ENCODE measurements at regions of chr1 and their contacts with region 1.

Region 1: DNA sequence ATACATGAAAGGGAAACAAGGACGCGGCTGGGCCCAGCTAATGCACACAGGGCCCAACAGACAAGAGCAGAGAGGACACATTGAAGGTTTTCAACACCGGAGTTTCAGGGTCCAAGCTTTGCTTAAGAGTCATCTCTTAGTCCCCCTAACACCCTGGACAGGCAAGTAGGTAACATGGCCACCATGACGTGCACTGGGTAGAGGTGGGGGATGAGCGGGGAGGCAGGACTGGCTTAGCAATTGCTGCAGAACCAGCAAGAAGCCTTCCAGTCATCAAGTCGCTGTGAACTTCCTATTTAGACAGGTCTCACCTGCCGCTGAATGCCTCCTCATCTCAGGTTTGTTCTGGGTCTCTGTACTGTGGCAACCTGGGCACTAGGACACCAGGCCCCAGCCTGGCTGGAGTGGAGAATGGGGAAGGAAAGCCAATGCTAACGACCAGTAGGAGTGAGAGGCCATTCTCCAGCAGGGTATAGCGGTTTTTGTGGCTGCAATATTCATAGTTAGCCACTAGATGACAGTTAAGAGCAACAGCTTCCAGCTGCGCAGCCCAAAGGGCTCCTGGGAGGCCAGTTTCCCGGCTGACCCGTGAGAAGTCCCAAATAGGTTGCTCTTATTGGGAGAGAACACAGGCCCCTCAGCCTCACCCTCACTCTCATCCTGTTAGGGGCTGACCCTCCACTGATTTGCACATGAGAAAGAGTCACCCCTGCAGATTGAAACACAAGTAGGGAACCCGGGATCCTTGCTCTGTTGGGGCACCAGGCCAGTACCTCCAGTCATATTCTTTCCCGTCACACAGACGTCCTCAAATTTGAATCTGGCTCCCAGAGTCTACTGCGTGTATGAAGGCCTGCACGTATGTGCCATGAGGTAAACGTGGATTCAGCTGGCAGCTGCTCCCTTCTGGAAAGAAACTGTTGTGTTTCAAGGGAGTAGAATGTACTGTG is 6.0 kb upstream of the PIGC start:
- DNase-seq: peak; percentile 71
- H3K4me3 ChIP-seq: no peak overlapping the region; a peak in 1 of 4 replicates
- H3K27ac ChIP-seq: no peak overlapping the region
- H3K4me1 ChIP-seq: peaks cover 0 to 12% of the 10 kb centered on the region in 2 experiments; a peak in 2 of 4 replicates
- H3K27me3 ChIP-seq: no peaks in the 10 kb centered on the region
- CTCF ChIP-seq: peak; percentile 72
- EP300 ChIP-seq: no peak
- RAD21 ChIP-seq: peak; percentile 89

Region 2: GRCh38 chr1:172727956-172728603 is 278.2 kb after region 1 on chr1:
- CTCF ChIA-PET with region 1: interaction called, 16 read pairs
- POLR2A ChIA-PET with region 1: no interaction called
- DNase-seq: peak; percentile 28
- H3K4me3 ChIP-seq: no peak overlapping the region
- H3K27ac ChIP-seq: no peak overlapping the region
- H3K4me1 ChIP-seq: peaks cover 3 to 6% of the 10 kb centered on the region in 2 experiments; a peak in 2 of 4 replicates
- H3K27me3 ChIP-seq: no peaks in the 10 kb centered on the region
- CTCF ChIP-seq: peak; percentile 59
- EP300 ChIP-seq: no peak
- RAD21 ChIP-seq: peak; percentile 18; the same call in 1 of the 2 replicates